ENCODE measurements at regions of chr4 and their contacts with region 1.

Region 1: GRCh38 chr4:7067452-7068278 is at the start of gene GRPEL1:
- DNase-seq: peak; percentile 99
- ATAC-seq: peak; percentile 96
- H3K4me3 ChIP-seq: peak within 1 kb of the TSS; percentile 74
- H3K27ac ChIP-seq: peak within 1 kb of the TSS; percentile 85
- H3K4me1 ChIP-seq: peaks cover 7% of the 10 kb centered on the region; the same call in 1 of the 2 replicates
- H3K27me3 ChIP-seq: peaks cover 2% of the 10 kb centered on the region; the same call in 1 of the 2 replicates
- CTCF ChIP-seq: no peak
- POLR2A ChIP-seq: peak; percentile 95
- RAD21 ChIP-seq: no peak
- total RNA-seq, gene GRPEL1: 33.0 and 48.6 TPM in 2 replicates

Region 2: DNA sequence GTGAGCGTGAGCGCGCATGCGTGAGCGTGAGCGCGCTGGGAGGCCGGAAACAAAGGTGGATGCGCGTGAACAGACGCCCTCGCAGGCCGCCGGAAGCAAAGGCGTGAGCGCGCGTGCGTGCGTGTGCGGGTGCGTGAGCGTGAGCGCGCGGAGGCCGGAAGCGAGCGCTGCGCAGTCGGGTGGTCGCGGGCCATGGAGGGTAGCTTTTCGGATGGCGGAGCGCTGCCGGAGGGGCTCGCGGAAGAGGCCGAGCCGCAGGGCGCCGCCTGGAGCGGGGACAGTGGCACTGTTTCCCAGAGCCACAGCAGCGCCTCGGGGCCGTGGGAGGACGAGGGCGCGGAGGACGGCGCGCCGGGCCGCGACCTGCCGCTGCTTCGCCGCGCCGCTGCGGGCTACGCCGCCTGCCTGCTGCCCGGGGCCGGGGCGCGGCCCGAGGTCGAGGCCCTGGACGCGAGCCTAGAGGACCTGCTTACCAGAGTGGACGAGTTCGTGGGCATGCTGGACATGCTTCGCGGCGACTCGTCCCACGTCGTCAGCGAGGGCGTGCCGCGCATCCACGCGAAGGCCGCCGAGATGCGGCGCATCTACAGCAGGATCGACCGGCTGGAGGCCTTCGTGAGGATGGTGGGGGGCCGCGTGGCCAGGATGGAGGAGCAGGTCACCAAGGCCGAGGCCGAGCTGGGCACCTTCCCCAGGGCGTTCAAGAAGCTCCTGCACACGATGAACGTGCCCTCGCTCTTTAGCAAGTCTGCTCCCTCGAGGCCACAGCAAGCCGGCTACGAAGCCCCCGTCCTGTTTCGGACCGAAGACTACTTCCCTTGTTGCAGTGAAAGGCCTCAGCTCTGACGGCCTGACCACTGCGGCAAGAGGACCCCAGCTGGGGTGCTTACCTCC is 351.4 kb before region 1 on chr4 and contains the start of gene BLOC1S4:
- CTCF ChIA-PET with region 1: interaction called, 3 read pairs
- POLR2A ChIA-PET with region 1: no interaction called
- dilution Hi-C with region 1: no loop called
- in situ Hi-C with region 1: loop called (anchors 5 kb)
- intact Hi-C with region 1: loop called (anchors 1 kb)
- DNase-seq: peak; percentile 92
- ATAC-seq: peak; percentile 83
- H3K4me3 ChIP-seq: peak within 1 kb of the TSS; percentile 87
- H3K27ac ChIP-seq: peak within 1 kb of the TSS; percentile 88
- H3K4me1 ChIP-seq: no peaks in the 10 kb centered on the region
- H3K27me3 ChIP-seq: no peaks in the 10 kb centered on the region
- CTCF ChIP-seq: 0 out of 2 replicates have a peak, but pooled peaks have one; percentile 14
- POLR2A ChIP-seq: peak; percentile 66; the same call in 1 of the 2 replicates
- RAD21 ChIP-seq: no peak
- total RNA-seq, gene BLOC1S4: 8.8 and 13.3 TPM in 2 replicates

Region 3: GRCh38 chr4:6892190-6892908 is 175.3 kb before region 1 on chr4:
- CTCF ChIA-PET with region 1: no interaction called
- POLR2A ChIA-PET with region 1: no interaction called
- dilution Hi-C with region 1: no loop called
- in situ Hi-C with region 1: no loop called
- intact Hi-C with region 1: loop called (anchors 1 kb)
- DNase-seq: peak; percentile 79
- ATAC-seq: peak; percentile 49
- H3K4me3 ChIP-seq: no peak overlapping the region
- H3K27ac ChIP-seq: peak overlapping the region; percentile 99; the same call in 1 of the 2 replicates
- H3K4me1 ChIP-seq: peaks cover 22% of the 10 kb centered on the region
- H3K27me3 ChIP-seq: no peaks in the 10 kb centered on the region
- CTCF ChIP-seq: peak; percentile 31; the same call in 1 of the 2 replicates
- POLR2A ChIP-seq: no peak
- RAD21 ChIP-seq: peak; percentile 29; the same call in 1 of the 2 replicates

Region 4: DNA sequence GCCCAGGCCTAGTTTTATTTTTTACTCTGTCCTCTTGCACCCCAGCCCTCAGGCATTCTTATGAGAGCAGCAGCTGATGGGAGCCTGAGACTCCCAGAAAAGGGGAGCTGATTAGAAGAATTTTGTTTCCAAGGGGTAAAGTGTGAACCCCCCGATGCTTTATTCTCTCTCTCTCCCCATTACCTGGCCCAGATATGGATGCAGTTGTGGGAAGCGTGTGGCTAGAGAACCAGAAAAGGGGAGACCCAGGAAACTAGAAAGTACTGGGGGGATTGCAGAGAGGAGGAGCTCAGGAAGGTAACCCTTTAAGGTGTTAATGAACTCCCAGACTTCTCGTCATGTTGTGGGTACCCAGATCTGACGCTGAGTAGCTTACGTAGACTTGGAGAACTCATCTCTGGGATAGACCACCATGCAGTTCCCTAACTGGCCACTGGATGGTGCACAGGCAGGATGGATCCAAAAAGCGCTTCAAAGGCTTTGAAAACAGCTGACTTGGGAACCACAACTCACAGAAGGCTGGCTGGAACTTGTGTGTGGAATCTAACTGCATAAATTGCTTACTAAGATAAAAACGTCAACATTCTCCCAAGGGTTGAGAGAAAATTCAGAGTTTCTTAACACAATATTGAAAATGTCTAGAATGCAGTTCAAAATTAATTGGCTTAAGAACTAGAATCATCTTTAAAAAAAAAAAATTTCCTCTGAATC is 93.4 kb before region 1 on chr4:
- CTCF ChIA-PET with region 1: interaction called, 3 read pairs
- POLR2A ChIA-PET with region 1: interaction called, 3 read pairs
- dilution Hi-C with region 1: no loop called
- in situ Hi-C with region 1: no loop called
- intact Hi-C with region 1: loop called (anchors 1 kb)
- DNase-seq: peak; percentile 84
- ATAC-seq: peak; percentile 99
- H3K4me3 ChIP-seq: no peak overlapping the region
- H3K27ac ChIP-seq: no peak overlapping the region
- H3K4me1 ChIP-seq: 0 out of 2 replicates have a peak, but pooled peaks cover 1% of the 10 kb centered on the region
- H3K27me3 ChIP-seq: no peaks in the 10 kb centered on the region
- CTCF ChIP-seq: peak; percentile 88
- POLR2A ChIP-seq: no peak
- RAD21 ChIP-seq: peak; percentile 80

Region 5: GRCh38 chr4:7124689-7125442 is 57.2 kb after region 1 on chr4:
- CTCF ChIA-PET with region 1: no interaction called
- POLR2A ChIA-PET with region 1: no interaction called
- dilution Hi-C with region 1: no loop called
- in situ Hi-C with region 1: no loop called
- intact Hi-C with region 1: loop called (anchors 2 kb)
- DNase-seq: peak; percentile 95
- ATAC-seq: peak; percentile 99
- H3K4me3 ChIP-seq: no peak overlapping the region
- H3K27ac ChIP-seq: no peak overlapping the region; the same call in 1 of the 2 replicates
- H3K4me1 ChIP-seq: peaks cover 4% of the 10 kb centered on the region; the same call in 1 of the 2 replicates
- H3K27me3 ChIP-seq: peaks cover 10% of the 10 kb centered on the region; the same call in 1 of the 2 replicates
- CTCF ChIP-seq: 0 out of 2 replicates have a peak, but pooled peaks have one; percentile 21
- POLR2A ChIP-seq: no peak
- RAD21 ChIP-seq: peak; percentile 20; the same call in 1 of the 2 replicates